PC-9 (cell line): ENCODE measurements at regions of chr22 and their contacts with region 1.

Region 1: DNA sequence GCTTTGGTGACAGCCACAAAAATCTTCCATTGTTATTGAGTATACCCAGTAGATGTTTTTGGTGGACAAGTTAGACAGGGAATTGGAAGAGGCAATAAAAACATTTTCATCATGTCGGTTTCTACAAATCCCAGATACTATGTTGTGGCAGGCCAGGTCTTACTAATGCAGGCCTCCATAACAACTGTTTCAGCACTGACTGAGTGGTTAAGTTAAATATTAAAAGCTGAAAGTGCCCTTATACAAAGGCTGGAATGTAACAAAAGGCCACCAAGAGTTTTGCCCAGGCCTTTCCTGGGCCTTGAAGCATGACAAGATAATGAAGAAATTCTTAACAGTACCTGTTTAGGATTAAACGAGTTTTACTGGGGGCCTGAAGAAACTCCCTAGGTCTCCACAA is 29.3 kb downstream of the DMC1 start:
- DNase-seq: no peak
- H3K4me3 ChIP-seq: no peak overlapping the region
- H3K27ac ChIP-seq: no peak overlapping the region
- H3K4me1 ChIP-seq: no peaks in the 10 kb centered on the region
- H3K27me3 ChIP-seq: no peaks in the 10 kb centered on the region
- CTCF ChIP-seq: no peak

Region 2: GRCh38 chr22:37862570-37863325 is 678.0 kb before region 1 on chr22:
- CTCF ChIA-PET with region 1: no interaction called
- POLR2A ChIA-PET with region 1: no interaction called
- intact Hi-C with region 1: no loop called
- DNase-seq: no peak
- H3K4me3 ChIP-seq: no peak overlapping the region
- H3K27ac ChIP-seq: no peak overlapping the region
- H3K4me1 ChIP-seq: no peaks in the 10 kb centered on the region
- H3K27me3 ChIP-seq: no peaks in the 10 kb centered on the region
- CTCF ChIP-seq: no peak

Region 3: GRCh38 chr22:38513063-38513462 is 27.6 kb before region 1 on chr22:
- CTCF ChIA-PET with region 1: no interaction called
- POLR2A ChIA-PET with region 1: no interaction called
- intact Hi-C with region 1: no loop called
- DNase-seq: peak in 1 of 2 experiments; percentile 18
- H3K4me3 ChIP-seq: no peak overlapping the region
- H3K27ac ChIP-seq: no peak overlapping the region
- H3K4me1 ChIP-seq: peaks cover 6% of the 10 kb centered on the region; the same call in 1 of the 2 replicates
- H3K27me3 ChIP-seq: no peaks in the 10 kb centered on the region
- CTCF ChIP-seq: peak; percentile 48; the same call in 1 of the 2 replicates

Region 4: GRCh38 chr22:38554281-38554680 is 13.6 kb after region 1 on chr22:
- CTCF ChIA-PET with region 1: interaction called, 10 read pairs
- POLR2A ChIA-PET with region 1: no interaction called
- intact Hi-C with region 1: no loop called
- DNase-seq: no peak
- H3K4me3 ChIP-seq: no peak overlapping the region
- H3K27ac ChIP-seq: no peak overlapping the region
- H3K4me1 ChIP-seq: peaks cover 12% of the 10 kb centered on the region
- H3K27me3 ChIP-seq: no peaks in the 10 kb centered on the region
- CTCF ChIP-seq: no peak